ENCODE measurements at regions of chr1 and their contacts with region 1.

Region 1: GRCh38 chr1:2391041-2391930 is at the starts of genes MORN1 and RER1:
- DNase-seq: peak; percentile 98
- H3K4me3 Mint-ChIP-seq: peak within 1 kb of the TSS; percentile 66
- H3K27ac Mint-ChIP-seq: peak within 1 kb of the TSS; percentile 87
- H3K4me1 Mint-ChIP-seq: peaks cover 18% of the 10 kb centered on the region
- H3K27me3 Mint-ChIP-seq: no peaks in the 10 kb centered on the region
- CTCF ChIP-seq: no peak
- total RNA-seq, gene MORN1: 19.4 and 28.0 TPM in 2 replicates
- total RNA-seq, gene RER1: 172 and 224 TPM in 2 replicates

Region 2: DNA sequence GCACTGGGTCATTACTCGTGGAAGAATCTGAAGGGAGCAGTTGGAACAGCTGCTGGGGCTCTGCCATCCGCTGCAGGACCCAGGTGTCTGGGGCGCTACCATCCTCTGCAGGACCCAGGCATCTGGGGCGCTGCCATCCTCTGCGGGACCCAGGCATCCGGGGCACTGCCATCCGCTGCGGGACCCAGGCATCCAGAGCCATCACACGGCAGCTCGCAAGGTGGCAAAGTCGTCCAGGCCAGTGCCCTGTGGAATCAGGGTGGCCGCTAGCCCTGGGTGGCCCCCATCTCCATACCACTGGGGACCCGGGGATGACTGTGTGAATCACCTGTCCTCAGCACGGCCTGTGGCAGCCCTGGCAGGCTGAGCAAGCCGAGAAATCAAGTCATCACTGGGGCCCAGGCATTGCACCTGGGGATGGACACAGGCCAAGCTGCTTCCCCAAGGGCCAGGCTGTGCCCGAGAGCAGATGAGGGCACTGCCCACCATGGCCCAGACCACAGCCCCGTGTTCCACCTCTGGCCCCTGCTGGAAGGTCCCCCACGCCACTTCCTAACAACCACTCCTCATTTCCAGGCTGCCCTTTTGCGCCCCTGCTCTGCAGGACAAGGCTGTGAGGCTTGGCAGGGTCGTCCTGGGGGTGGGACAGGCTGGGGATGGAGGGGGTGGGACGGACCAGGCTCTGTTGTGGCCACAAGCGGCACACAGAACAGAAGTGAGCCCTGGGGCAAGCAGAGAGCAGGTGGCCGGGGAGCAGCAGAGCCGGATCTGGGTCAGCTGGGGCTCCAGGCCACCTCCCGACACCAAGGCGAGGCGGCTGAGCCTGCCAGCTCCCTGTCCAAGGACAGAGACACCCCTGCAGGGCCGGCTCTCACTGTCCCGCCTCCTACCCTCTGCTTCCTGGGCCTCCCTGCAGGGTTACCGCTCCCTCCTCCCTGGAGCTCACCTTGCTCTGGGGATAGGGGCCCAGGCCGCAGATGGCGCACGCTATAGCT is 359.4 kb before region 1 on chr1:
- CTCF ChIA-PET with region 1: no interaction called
- POLR2A ChIA-PET with region 1: no interaction called
- intact Hi-C with region 1: no loop called
- DNase-seq: no peak
- H3K4me3 Mint-ChIP-seq: no peak overlapping the region
- H3K27ac Mint-ChIP-seq: no peak overlapping the region
- H3K4me1 Mint-ChIP-seq: no peaks in the 10 kb centered on the region
- H3K27me3 Mint-ChIP-seq: no peaks in the 10 kb centered on the region
- CTCF ChIP-seq: no peak

Region 3: DNA sequence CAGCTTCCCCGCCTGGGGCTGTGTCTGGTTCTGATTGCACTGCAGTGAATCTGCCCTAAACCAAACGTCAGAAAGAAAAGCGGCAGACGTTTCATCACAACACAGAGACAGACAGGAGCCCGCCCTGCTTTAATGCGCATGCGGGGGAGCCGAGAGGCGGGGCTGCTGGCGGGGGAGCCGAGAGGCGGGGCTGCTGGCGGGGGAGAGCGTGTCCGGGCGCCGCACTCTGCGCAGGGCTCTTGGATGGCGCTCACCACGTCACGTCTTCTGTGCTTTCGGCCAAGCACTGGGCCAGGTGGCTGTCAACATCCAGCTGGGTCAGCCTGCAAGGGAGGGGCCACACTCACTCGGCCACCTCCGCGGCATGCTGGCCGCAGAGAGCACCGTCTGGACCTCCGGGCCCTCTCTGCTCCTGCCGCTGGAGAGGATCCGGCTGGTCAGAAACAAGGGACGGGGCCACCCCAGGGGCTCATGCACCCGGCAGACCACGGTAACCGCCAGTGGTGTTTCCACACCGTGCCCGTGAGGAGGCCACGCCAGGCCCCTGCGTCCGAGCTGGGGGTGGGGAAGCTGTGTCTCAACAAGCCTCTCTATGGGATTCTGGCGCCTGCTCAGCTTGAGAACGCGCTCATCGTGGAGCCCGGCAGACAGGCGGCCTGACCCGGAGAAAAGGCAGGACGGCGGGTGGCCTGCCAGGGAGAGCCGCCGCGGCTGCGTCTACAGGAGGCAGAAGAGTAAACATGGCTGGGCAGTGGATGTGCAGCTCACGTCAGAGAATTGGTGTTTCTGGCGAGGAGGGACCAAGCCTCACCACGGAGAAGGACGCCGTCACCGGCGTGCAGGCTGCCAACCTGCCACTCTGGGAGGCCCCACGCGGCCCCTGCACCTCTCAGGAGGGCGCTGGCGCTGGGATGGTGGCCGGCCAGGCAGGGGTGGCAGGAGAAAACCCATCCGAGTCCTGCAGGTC is 201.5 kb before region 1 on chr1:
- CTCF ChIA-PET with region 1: interaction called, 14 read pairs
- POLR2A ChIA-PET with region 1: interaction called, 29 read pairs
- intact Hi-C with region 1: no loop called
- DNase-seq: peak; percentile 95
- H3K4me3 Mint-ChIP-seq: peak overlapping the region; percentile 83
- H3K27ac Mint-ChIP-seq: peak overlapping the region; percentile 82
- H3K4me1 Mint-ChIP-seq: peaks cover 5% of the 10 kb centered on the region
- H3K27me3 Mint-ChIP-seq: no peaks in the 10 kb centered on the region
- CTCF ChIP-seq: no peak

Region 4: DNA sequence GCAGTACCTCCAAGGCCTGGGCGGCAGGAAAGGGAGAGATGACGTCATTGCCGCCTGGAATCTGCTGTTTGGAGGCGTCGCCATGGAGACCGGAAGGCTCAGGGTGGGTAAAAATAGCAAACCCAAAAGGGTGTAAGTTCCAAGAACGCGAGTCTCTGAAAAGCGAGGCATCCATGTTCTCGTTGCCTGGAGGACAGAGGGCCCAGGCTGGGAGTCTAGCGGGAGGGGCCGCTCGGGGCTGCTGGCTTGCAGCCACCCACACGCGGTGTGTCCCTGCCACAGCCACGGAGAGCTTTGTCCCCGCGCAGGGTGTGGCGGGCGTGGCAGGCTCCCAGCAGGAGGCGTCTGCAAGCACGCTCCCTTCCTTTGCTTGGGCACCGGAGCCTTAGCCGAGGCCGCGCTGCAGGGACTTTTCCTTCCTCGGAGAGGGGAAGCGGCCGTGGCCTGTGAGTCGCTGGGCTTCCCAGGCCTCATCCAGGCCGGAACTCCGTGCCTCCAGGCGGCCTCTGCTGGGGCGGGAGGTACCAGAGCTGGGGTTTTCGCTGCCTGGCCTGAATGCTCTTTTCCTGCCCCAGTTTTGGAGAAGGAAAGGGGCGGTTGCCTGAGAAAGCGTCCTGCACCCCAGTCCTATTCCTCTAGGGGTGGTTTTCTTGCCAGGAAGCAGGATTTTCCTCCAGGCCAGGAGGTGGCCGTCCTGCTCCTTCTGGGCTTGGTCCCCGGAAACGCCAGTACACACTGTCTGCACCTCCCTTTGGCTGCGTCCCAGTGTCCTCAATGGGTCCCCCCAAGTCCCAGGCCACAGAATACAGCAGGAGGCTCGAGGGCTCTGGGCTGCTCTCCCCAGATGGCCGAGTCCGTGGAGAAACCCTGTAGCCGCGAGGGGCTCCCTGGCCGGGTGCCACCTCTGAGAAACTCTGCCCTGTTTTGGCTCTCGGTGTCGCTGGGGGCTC is 178.5 kb before region 1 on chr1:
- CTCF ChIA-PET with region 1: interaction called, 3 read pairs
- POLR2A ChIA-PET with region 1: interaction called, 12 read pairs
- intact Hi-C with region 1: no loop called
- DNase-seq: peak; percentile 89
- H3K4me3 Mint-ChIP-seq: peak overlapping the region; percentile 16
- H3K27ac Mint-ChIP-seq: peak overlapping the region; percentile 83
- H3K4me1 Mint-ChIP-seq: peaks cover 14% of the 10 kb centered on the region
- H3K27me3 Mint-ChIP-seq: no peaks in the 10 kb centered on the region
- CTCF ChIP-seq: peak; percentile 13

Region 5: DNA sequence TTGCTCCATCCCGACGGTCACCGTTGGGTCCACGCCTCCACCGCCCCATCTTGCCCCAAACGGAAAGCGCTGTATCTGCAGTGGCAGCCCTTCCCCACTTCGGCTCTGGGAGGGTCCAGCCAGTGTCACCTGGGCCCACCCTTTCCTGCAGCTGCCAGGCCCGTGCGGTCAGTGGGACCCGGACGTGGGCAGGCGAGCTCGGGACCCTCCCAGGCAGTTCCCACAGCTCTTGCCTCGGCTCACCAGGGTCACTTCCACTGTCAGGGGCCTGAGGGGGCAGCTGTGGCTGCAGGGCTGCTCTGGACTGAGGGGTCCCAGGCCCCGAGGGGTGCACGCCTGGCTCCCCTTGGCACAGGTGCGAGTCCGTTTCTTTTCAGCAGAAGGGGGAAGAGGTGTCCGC is 82.4 kb before region 1 on chr1:
- CTCF ChIA-PET with region 1: no interaction called
- POLR2A ChIA-PET with region 1: no interaction called
- intact Hi-C with region 1: no loop called
- DNase-seq: no peak
- H3K4me3 Mint-ChIP-seq: no peak overlapping the region
- H3K27ac Mint-ChIP-seq: no peak overlapping the region
- H3K4me1 Mint-ChIP-seq: no peaks in the 10 kb centered on the region
- H3K27me3 Mint-ChIP-seq: no peaks in the 10 kb centered on the region
- CTCF ChIP-seq: no peak

Region 6: DNA sequence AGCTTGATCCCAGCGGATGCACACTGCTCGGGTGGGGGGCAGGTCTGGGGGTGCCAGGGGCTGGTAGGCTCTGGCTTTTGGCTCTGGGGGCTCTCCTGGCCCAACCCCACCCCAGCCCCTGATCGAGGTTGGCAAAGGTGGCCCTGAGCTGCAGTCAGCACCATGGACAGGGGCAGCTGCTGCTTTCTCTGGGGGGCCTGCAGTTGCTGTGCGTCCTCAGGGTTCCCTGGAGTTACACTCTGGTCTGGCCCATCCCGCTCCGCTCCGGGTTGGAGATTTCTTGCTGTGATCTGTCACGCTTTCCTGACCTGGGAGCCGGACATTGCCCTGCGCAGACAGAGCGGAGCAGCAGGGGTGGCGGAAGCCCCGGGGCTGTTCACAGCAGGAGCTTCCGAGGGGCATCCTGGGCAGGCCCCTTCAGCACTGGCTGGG is 76.8 kb after region 1 on chr1:
- CTCF ChIA-PET with region 1: no interaction called
- POLR2A ChIA-PET with region 1: no interaction called
- intact Hi-C with region 1: no loop called
- DNase-seq: peak; percentile 17
- H3K4me3 Mint-ChIP-seq: no peak overlapping the region
- H3K27ac Mint-ChIP-seq: no peak overlapping the region
- H3K4me1 Mint-ChIP-seq: peaks cover 6% of the 10 kb centered on the region
- H3K27me3 Mint-ChIP-seq: no peaks in the 10 kb centered on the region
- CTCF ChIP-seq: no peak

Region 7: GRCh38 chr1:2534687-2535441 is 143.6 kb after region 1 on chr1:
- CTCF ChIA-PET with region 1: no interaction called
- POLR2A ChIA-PET with region 1: interaction called, 11 read pairs
- intact Hi-C with region 1: no loop called
- DNase-seq: peak; percentile 86
- H3K4me3 Mint-ChIP-seq: peak overlapping the region; percentile 41
- H3K27ac Mint-ChIP-seq: peak overlapping the region; percentile 59
- H3K4me1 Mint-ChIP-seq: peaks cover 48% of the 10 kb centered on the region
- H3K27me3 Mint-ChIP-seq: no peaks in the 10 kb centered on the region
- CTCF ChIP-seq: no peak

Measured in MCF 10A (cell line).